ENCODE measurements at regions of chr18 and their contacts with region 1.

Region 1: GRCh38 chr18:56575819-56576663 is 62.4 kb downstream of the TXNL1 start:
- DNase-seq: no peak
- H3K4me3 ChIP-seq: no peak overlapping the region
- CTCF ChIP-seq: peak in 1 of 3 donors; percentile 35
- POLR2A ChIP-seq: no peak

Region 2: GRCh38 chr18:55415258-55415871 is 1160.7 kb before region 1 on chr18:
- intact Hi-C with region 1: loop called (anchors 10 kb)
- DNase-seq: peak; percentile 88 to 97
- H3K4me3 ChIP-seq: no peak overlapping the region
- CTCF ChIP-seq: peak in 1 of 3 donors; percentile 50
- POLR2A ChIP-seq: no peak

Region 3: DNA sequence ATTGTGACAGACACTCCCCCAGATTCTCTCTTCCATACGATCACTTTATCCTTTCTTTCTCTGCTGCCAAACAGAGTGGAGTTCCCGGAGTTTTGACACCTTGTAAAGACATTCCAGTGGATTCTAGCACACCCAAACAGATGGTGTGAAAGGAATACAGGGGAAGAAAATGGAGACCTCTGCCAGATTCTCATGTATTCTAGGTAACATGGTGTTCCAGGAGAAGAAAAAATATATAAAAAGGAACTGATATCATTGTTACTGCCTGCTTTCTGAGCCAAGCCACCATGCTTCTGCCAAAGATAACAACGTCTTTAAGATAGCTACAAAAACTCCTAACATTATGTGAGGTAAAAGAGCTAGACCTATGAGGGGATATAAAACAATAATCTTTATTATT is 74.1 kb before region 1 on chr18:
- intact Hi-C with region 1: no loop called
- DNase-seq: no peak
- H3K4me3 ChIP-seq: no peak overlapping the region
- CTCF ChIP-seq: no peak
- POLR2A ChIP-seq: no peak

Region 4: DNA sequence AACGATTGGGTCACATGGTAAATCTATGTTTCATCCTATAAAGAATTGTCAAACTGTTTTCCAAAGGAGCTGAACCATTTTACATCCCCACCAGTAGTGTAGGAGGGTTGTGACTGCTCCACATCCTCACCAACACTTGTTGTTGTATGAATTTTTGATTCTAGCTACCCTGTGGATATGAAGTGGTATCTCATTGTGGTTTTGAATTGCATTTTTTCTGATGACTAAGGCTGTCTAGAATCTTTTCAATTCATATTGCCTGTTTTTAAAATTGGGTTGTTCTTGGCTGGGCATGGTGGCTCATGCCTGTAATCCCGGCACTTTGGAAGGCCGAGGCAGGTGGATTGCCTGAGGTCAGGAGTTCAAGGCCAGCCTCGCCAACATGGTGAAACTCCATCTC is 17.9 kb after region 1 on chr18:
- intact Hi-C with region 1: loop called (anchors 1 kb)
- DNase-seq: no peak
- H3K4me3 ChIP-seq: no peak overlapping the region
- CTCF ChIP-seq: no peak
- POLR2A ChIP-seq: no peak

Measured in lower leg skin (tissue), 4 donors.